ENCODE measurements at regions of chr1 and their contacts with region 1.

Region 1: GRCh38 chr1:112809253-112809684 is 94.1 kb upstream of the PPM1J start:
- DNase-seq: peak; percentile 81
- ATAC-seq: peak; percentile 91
- H3K4me3 Mint-ChIP-seq: no peak overlapping the region
- H3K27ac Mint-ChIP-seq: no peak overlapping the region
- H3K4me1 Mint-ChIP-seq: no peaks in the 10 kb centered on the region
- H3K27me3 Mint-ChIP-seq: peaks cover 5% of the 10 kb centered on the region
- CTCF ChIP-seq: peak; percentile 83

Region 2: DNA sequence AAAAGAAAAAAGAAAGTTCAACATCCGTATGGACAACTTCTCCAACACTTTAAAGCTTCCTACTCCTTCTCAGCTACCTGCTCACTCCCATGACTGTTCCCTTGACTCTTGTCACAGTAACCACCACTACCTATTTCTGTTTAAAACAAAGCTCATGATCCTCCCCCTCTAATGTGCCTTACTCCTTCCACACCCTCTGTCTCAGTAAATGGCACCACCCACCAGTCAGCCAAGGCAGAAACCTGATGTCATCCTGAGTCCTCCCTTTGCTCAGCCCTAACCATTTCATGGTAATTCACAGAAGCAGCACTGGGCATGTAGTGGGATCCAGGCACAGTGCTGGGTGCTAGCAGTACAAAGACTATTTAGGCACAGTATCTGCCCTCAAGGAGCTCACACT is 31.1 kb before region 1 on chr1:
- CTCF ChIA-PET with region 1: no interaction called
- POLR2A ChIA-PET with region 1: no interaction called
- intact Hi-C with region 1: no loop called
- DNase-seq: no peak
- ATAC-seq: no peak
- H3K4me3 Mint-ChIP-seq: no peak overlapping the region
- H3K27ac Mint-ChIP-seq: no peak overlapping the region
- H3K4me1 Mint-ChIP-seq: no peaks in the 10 kb centered on the region
- H3K27me3 Mint-ChIP-seq: peaks cover 1% of the 10 kb centered on the region
- CTCF ChIP-seq: no peak

Region 3: GRCh38 chr1:112798292-112798691 is 11.0 kb before region 1 on chr1:
- CTCF ChIA-PET with region 1: interaction called, 13 read pairs
- POLR2A ChIA-PET with region 1: no interaction called
- intact Hi-C with region 1: no loop called
- DNase-seq: no peak
- ATAC-seq: no peak
- H3K4me3 Mint-ChIP-seq: no peak overlapping the region
- H3K27ac Mint-ChIP-seq: no peak overlapping the region
- H3K4me1 Mint-ChIP-seq: no peaks in the 10 kb centered on the region
- H3K27me3 Mint-ChIP-seq: no peaks in the 10 kb centered on the region
- CTCF ChIP-seq: no peak

Region 4: DNA sequence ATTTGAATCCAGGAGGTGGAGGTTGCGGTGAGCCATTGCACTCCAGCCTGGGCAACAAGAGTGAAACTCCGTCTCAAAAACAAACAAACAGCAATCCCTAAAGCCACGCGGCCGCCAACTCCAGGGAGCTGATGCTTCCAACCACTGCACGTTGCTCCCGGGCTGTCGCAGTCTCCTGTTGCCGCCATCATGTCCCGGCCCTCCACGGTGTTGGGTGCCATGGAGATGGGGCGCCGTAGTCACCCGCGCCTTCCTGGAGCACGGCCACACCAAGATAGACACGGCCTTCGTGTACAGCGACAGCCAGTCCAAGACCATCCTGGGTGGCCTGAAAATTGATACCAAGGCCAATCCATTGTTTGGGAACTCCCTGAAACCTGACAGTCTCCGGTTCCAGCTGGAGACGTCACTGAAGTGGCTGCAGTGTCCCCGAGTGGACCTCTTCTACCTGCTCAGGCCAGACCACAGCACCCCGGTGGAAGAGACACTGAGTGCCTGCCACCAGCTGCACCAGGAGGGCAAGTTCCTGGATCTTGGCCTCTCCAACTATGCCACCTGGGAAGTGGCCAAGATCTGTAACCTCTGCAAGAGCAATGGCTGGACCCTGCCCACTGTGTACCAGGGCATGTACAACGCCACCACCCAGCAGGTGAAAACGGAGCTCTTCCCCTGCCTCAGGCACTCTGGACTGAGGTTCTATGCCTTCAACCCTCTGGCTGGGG is 114.1 kb after region 1 on chr1:
- CTCF ChIA-PET with region 1: no interaction called
- POLR2A ChIA-PET with region 1: no interaction called
- intact Hi-C with region 1: no loop called
- DNase-seq: no peak
- ATAC-seq: no peak
- H3K4me3 Mint-ChIP-seq: no peak overlapping the region
- H3K27ac Mint-ChIP-seq: no peak overlapping the region
- H3K4me1 Mint-ChIP-seq: no peaks in the 10 kb centered on the region
- H3K27me3 Mint-ChIP-seq: no peaks in the 10 kb centered on the region
- CTCF ChIP-seq: no peak